HCT116 (cell line): ENCODE measurements at regions of chr19 and their contacts with region 1.

Region 1: GRCh38 chr19:19776041-19777008 is 43.4 kb upstream of the ZNF14 start:
- DNase-seq: peak; percentile 98
- ATAC-seq: peak; percentile 99
- H3K4me3 ChIP-seq: peak overlapping the region; percentile 82 to 93
- H3K27ac ChIP-seq: peak overlapping the region; percentile 69
- H3K4me1 ChIP-seq: peaks cover 6 to 14% of the 10 kb centered on the region in 2 experiments; a peak in 2 of 4 replicates
- H3K27me3 ChIP-seq: no peaks in the 10 kb centered on the region
- CTCF ChIP-seq: no peak
- POLR2A ChIP-seq: peak; percentile 66
- RAD21 ChIP-seq: no peak

Region 2: GRCh38 chr19:19540715-19541440 is 235.4 kb before region 1 on chr19:
- CTCF ChIA-PET with region 1: no interaction called
- POLR2A ChIA-PET with region 1: no interaction called
- RAD21 ChIA-PET with region 1: no interaction called
- intact Hi-C with region 1: loop called (anchors 10 kb)
- DNase-seq: peak; percentile 93
- ATAC-seq: peak; percentile 95
- H3K4me3 ChIP-seq: peak overlapping the region; percentile 53 to 64
- H3K27ac ChIP-seq: peak overlapping the region; percentile 67; the same call in 1 of the 2 replicates
- H3K4me1 ChIP-seq: peaks cover 12 to 34% of the 10 kb centered on the region in 2 experiments
- H3K27me3 ChIP-seq: no peaks in the 10 kb centered on the region
- CTCF ChIP-seq: no peak; a peak in 1 of 6 replicates
- POLR2A ChIP-seq: no peak
- RAD21 ChIP-seq: no peak

Region 3: DNA sequence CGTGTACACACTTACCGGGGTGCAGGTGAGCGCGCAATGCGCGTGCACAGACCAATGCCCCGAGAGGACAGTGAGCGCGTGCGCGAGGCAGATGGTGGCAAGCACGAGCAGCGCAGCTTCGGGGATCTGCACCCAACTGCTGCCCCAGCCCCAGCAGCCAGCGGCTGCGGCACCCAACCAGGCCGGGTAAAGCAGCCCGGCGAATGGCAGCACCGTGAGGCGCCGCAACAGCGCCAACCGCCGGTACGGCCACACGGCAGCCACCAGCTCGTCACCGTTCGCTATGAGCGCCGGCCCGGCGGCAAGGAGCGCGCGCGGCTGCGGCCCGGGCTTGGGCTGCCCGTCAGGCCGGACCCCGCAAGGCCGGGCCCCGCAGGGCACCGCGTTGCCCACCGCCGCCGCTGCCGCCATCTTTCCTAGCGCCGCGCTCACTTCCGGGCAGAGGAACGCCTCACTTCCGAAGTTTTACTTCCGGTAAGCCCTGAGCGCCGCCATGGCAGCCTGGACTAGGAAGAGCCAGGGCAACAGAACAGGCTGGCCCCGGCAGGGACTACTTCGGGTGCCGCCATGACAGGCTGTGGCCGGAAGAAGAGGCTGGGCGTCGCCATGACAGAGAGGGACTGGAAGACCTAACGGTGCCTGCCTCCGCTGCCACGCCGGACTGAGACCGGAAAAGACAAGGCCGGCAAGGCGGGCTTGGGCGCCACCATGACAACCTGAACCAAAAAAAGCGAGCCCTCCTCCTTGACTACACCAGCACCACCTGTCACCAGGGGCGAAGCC is 112.9 kb before region 1 on chr19 and contains the start of gene ATP13A1:
- CTCF ChIA-PET with region 1: no interaction called
- POLR2A ChIA-PET with region 1: interaction called, 7 read pairs
- RAD21 ChIA-PET with region 1: interaction called in 1 of 2 experiments, 3 read pairs
- intact Hi-C with region 1: loop called (anchors 1 kb)
- DNase-seq: peak; percentile 91
- ATAC-seq: peak; percentile 85
- H3K4me3 ChIP-seq: peak within 1 kb of the TSS; percentile 70 to 96
- H3K27ac ChIP-seq: peak within 1 kb of the TSS; percentile 92
- H3K4me1 ChIP-seq: peaks cover 13 to 37% of the 10 kb centered on the region in 2 experiments; a peak in 3 of 4 replicates
- H3K27me3 ChIP-seq: no peaks in the 10 kb centered on the region
- CTCF ChIP-seq: no peak; a peak in 1 of 6 replicates
- POLR2A ChIP-seq: no peak
- RAD21 ChIP-seq: no peak
- total RNA-seq, gene ATP13A1: 73.7 TPM

Region 4: DNA sequence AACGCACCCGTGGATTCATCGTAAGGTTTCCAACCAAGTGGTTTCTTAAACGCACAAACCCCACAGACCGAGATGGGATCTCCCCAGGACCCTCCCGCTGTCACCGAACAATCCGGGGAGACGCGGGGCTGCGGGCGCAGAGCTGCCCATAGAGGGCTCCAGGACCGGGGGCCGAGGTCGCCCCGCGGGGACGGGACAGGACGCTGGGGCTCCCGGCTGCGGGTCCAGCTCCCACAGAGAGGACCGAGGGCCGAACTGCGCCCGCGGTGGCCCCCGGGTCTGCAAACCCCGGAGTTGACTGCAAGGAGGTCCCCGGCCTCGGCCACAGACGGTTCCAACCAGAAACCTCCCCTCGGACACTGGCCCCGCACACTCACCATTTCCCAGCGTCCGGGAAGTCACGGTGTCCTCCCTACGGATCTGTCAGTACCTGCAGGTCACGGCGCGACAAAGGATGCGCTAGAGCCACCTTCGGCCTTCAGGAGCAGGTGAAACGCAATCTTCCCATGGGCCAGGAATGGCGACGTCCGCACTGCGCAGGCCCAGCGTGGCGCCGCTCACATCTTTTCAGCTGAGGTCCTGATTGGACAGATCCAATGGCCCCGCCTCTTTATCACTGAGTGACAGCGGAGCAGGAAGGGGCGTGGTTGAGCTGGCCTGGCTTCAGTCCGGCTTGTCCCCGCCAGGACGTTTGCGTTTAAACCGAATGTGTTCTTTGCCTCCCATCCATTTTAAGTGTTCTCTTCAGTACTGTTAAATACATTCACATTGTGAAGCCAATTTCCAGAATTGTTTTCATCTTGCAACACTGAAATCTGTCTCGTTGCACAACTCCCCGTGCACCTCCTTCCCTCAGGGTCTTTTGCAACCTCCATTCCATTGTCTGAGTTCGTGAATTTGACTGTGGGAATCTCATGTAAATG is 43.5 kb before region 1 on chr19 and contains the start of gene ZNF14:
- CTCF ChIA-PET with region 1: no interaction called
- POLR2A ChIA-PET with region 1: interaction called, 8 read pairs
- RAD21 ChIA-PET with region 1: interaction called in 1 of 2 experiments, 3 read pairs
- intact Hi-C with region 1: loop called (anchors 1 kb)
- DNase-seq: peak; percentile 91
- ATAC-seq: peak; percentile 100
- H3K4me3 ChIP-seq: peak within 1 kb of the TSS; percentile 76 to 87
- H3K27ac ChIP-seq: peak within 1 kb of the TSS; percentile 59
- H3K4me1 ChIP-seq: peaks cover 0 to 9% of the 10 kb centered on the region in 2 experiments; a peak in 2 of 4 replicates
- H3K27me3 ChIP-seq: no peaks in the 10 kb centered on the region
- CTCF ChIP-seq: peak in 2 of 3 experiments; percentile 17 to 24; a peak in 2 of 6 replicates
- POLR2A ChIP-seq: peak; percentile 94
- RAD21 ChIP-seq: no peak
- total RNA-seq, gene ZNF14: 4.8 TPM

Region 5: DNA sequence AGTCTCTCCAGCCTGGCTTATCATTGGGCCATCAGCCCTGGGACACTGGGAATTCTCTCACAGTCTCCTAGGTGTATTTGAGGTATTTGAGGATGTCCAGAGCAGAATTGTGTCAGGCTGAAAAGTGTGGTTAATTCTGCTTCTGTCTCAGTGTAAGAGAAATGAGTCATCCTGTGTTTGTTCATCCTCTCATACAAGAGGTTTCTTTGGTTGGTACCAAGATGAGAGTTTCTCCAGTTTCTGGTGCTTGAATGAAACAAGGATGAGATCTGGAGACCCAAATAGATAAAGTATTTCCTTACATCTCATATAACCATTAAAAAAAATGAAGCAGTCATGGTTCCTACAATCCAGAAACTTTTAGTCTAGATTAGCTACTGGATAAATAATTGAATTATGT is 97.1 kb after region 1 on chr19:
- CTCF ChIA-PET with region 1: no interaction called
- POLR2A ChIA-PET with region 1: no interaction called
- RAD21 ChIA-PET with region 1: no interaction called
- intact Hi-C with region 1: no loop called
- DNase-seq: no peak
- ATAC-seq: no peak
- H3K4me3 ChIP-seq: no peak overlapping the region
- H3K27ac ChIP-seq: no peak overlapping the region
- H3K4me1 ChIP-seq: no peaks in the 10 kb centered on the region
- H3K27me3 ChIP-seq: no peaks in the 10 kb centered on the region
- CTCF ChIP-seq: no peak
- POLR2A ChIP-seq: no peak
- RAD21 ChIP-seq: no peak

Region 6: DNA sequence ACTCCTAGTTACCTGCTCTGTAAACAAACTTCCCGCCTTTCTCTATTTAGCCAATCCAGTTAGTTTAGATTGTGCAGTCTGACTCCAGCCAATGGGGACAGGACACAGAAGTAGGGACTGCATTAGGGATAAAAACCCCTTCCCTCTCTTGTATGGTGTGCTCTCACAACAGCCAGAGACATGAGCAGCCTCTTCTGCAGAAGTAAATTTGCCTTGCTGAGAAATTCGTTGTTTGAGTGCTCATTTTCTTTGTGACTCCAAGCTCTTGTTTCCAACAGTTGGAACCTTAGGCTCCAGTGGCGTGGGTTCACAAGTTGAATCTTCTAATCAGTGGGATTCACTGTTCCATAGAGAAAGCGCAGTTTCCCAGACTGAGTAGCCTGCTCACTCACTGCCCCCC is 190.5 kb after region 1 on chr19:
- CTCF ChIA-PET with region 1: no interaction called
- POLR2A ChIA-PET with region 1: no interaction called
- RAD21 ChIA-PET with region 1: no interaction called
- intact Hi-C with region 1: no loop called
- DNase-seq: no peak
- ATAC-seq: no peak
- H3K4me3 ChIP-seq: no peak overlapping the region
- H3K27ac ChIP-seq: no peak overlapping the region
- H3K4me1 ChIP-seq: no peaks in the 10 kb centered on the region
- H3K27me3 ChIP-seq: no peaks in the 10 kb centered on the region
- CTCF ChIP-seq: no peak
- POLR2A ChIP-seq: no peak
- RAD21 ChIP-seq: no peak